Caco-2 (cell line): ENCODE measurements at regions of chr19 and their contacts with region 1.

Region 1: DNA sequence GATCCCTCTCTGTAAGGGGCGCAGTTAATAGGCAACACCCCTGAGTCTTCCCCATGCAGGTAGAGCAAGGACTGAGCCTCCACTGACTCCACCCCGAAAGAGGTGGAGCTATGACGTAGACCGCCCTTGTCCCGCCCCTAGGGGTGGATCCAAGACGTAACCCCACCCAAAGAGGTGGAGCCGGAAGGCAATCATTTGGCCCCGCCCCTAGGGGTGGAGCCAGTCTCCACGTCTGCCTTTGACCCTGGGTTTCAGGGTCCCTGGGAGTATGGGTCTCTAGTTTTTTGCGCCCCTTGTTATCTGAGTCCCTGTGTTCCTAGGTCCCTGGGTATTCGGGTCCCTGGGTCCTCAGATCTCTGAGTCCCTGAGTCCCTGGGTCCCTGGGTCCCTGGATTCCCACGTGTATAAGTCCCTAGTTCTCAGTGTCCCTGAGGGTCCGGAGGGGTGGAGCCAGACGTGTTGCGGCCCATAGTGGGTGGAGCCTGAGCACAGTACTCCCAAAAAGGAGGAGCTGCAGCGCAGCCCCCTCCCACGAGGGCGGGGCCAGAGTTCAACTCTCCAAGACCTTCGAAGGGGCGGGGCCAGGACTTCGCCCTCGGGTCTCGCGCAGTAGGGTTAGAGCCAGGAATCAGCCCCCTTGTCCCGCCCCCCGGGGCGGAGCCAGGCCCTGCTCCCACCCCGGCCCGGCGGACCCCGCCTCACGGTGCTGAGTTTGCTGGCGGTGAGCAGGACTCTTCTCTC is 5.3 kb downstream of the DENND1C start:
- DNase-seq: peak; percentile 98 to 99
- H3K4me3 ChIP-seq: peak overlapping the region; percentile 47
- H3K4me3 Mint-ChIP-seq: peak overlapping the region; percentile 84
- H3K27ac Mint-ChIP-seq: peak overlapping the region; percentile 91
- H3K4me1 ChIP-seq: peaks cover 19% of the 10 kb centered on the region
- H3K4me1 Mint-ChIP-seq: peaks cover 9% of the 10 kb centered on the region
- H3K27me3 ChIP-seq: no peaks in the 10 kb centered on the region
- H3K27me3 Mint-ChIP-seq: no peaks in the 10 kb centered on the region
- CTCF ChIP-seq: no peak

Region 2: DNA sequence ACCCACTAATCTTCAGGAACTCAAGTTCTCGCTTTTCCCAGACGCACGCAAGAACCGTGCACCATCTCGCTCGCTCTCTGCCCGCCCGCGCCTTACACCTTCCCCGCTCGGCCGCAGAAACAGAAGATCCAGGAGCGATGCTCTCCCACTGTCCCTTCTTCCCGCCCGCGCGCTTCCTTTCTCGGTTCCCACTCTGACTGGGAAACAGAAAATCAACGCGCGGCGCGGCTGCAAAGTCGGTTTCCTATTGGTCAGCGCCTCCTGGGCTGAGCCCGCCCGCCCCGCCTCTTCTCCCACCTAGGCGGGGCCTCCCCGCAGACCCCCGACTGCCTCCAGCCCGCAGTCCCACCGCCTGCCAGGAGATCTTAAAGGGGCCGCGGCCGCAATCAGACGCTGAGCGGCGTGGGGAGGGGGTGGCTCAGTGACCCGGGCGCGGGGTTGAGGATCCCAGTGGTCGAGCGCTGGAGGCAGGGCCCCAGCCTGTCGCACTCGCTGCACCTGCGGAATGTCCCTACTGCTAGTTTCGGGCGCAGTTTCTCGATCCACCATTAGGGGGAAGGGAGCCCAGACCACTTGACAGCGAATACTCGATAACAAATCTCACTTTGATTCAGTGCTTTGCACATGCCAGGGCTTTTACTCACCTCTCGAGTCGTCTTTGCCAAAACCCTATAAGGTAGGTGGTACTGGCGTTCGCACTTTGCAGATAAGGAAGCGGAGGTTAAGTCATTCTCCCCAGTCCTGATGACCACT is 16.0 kb before region 1 on chr19:
- CTCF ChIA-PET with region 1: interaction called, 3 read pairs
- POLR2A ChIA-PET with region 1: interaction called, 11 read pairs
- intact Hi-C with region 1: loop called (anchors 1 kb)
- DNase-seq: peak; percentile 98
- H3K4me3 ChIP-seq: peak overlapping the region; percentile 50
- H3K4me3 Mint-ChIP-seq: peak overlapping the region; percentile 86
- H3K27ac Mint-ChIP-seq: peak overlapping the region; percentile 87
- H3K4me1 ChIP-seq: no peaks in the 10 kb centered on the region
- H3K4me1 Mint-ChIP-seq: peaks cover 15% of the 10 kb centered on the region
- H3K27me3 ChIP-seq: no peaks in the 10 kb centered on the region
- H3K27me3 Mint-ChIP-seq: no peaks in the 10 kb centered on the region
- CTCF ChIP-seq: peak; percentile 55 to 65

Region 3: GRCh38 chr19:6509118-6509971 is 33.0 kb after region 1 on chr19:
- CTCF ChIA-PET with region 1: no interaction called
- POLR2A ChIA-PET with region 1: no interaction called
- intact Hi-C with region 1: no loop called
- DNase-seq: no peak
- H3K4me3 ChIP-seq: no peak overlapping the region
- H3K4me3 Mint-ChIP-seq: no peak overlapping the region
- H3K27ac Mint-ChIP-seq: no peak overlapping the region
- H3K4me1 ChIP-seq: peaks cover 44% of the 10 kb centered on the region
- H3K4me1 Mint-ChIP-seq: peaks cover 13% of the 10 kb centered on the region
- H3K27me3 ChIP-seq: no peaks in the 10 kb centered on the region
- H3K27me3 Mint-ChIP-seq: no peaks in the 10 kb centered on the region
- CTCF ChIP-seq: no peak